ENCODE measurements at regions of chr3 and their contacts with region 1.

Region 1: GRCh38 chr3:7876741-7877297 is 624.8 kb upstream of the LMCD1 start:
- DNase-seq: peak; percentile 79
- H3K4me3 Mint-ChIP-seq: peak overlapping the region; percentile 25
- H3K27ac Mint-ChIP-seq: peak overlapping the region; percentile 62
- H3K4me1 Mint-ChIP-seq: peaks cover 15% of the 10 kb centered on the region
- H3K27me3 Mint-ChIP-seq: no peaks in the 10 kb centered on the region

Region 2: DNA sequence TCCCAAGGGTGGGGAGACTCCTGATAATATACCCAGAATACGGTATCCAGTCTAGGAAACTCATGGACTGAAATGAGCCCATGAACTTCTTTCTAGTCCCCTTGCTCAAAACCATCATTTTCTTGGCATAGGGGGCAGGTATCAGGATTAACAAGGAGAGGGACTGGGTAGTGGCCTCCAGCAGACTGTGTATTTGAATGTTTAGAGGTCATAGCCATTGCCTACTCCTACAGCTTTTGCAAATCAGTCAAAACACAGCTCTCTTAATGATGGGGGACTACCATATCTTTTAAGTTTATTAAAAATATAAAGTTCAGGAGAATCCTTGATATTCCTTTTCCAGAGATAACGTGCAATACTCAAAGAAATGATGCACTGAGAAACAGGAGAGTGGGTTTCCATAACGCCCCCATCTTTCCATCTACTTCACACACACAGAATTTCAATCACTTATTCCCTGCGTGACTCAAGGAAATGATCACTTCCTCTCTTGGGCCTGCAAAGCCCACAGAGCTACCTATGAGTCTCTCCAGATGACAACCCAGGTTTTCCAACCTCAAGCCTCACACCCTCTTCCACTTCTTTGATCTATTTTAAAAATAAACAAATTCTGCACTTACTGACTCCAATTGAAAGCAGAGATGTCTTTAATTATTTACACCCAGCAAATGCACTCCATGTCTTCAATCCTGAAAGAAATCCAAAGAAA is 40.8 kb after region 1 on chr3:
- intact Hi-C with region 1: loop called (anchors 1 kb)
- DNase-seq: no peak
- H3K4me3 Mint-ChIP-seq: no peak overlapping the region
- H3K27ac Mint-ChIP-seq: no peak overlapping the region
- H3K4me1 Mint-ChIP-seq: peaks cover 2% of the 10 kb centered on the region
- H3K27me3 Mint-ChIP-seq: no peaks in the 10 kb centered on the region